ENCODE measurements at regions of chr9 and their contacts with region 1.

Region 1: DNA sequence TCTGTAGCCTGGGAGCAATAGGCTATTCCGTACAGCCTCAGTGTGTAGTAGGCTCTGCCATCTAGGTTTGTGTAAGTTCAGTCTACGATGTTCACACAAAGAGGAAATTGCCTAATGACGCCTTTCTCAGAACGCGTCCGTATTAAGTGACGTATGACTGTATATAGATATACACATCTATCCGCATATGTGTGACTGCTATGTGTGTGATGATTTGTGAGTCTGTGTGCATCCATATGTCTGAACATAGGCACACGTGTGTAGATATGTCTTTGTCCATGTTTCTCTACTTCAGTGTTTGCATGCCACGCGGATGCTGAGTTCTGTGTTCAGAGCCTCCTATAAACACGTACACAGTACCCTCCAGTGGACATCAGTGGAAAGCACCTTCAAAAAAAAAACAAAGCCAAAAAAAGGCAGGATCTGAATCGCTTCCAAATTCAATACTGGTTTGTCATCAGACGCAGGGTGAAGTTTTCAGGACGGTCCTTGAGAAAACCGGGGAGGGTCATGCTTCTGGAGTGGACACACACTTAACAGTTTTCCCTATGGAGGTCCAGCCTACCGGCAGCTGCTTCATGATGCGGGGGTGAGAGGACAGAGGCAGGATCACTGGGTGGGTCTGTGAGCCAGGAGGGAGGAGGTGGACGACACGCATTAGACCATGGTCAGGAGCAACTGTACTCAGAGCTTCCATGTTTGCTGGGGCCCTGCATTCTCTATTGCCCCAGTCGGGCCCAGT is 29.5 kb upstream of the ALDH1B1 start:
- DNase-seq: peak; percentile 68
- CTCF ChIP-seq: peak; percentile 71

Region 2: DNA sequence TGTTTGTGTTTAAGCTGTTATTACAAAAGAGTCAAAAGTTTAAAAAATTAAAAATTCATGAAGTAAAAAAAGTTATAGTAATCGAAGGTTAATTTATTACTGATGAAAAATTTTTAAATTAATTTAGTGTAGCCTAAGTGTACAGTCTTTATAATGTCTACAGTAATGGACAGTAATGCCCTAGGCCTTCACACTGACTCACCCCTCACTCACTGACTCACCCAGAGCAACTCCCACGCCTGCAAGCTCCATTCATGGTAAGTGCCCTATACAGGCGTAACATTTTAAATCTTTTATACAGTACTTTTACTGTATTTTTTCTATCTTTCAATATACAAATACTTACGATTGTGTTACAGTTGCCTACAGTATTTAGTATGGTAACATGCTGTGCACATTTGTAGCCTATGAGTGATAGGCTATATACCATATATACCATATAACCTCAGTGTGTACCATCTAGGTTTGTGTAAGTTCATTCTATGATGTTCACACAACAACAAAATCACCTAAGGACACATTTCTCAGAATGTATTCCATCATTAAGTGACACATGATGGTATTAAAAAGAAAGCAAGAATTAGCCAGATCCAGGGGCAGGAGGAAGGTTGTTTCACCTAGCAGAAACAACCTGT is 522.3 kb before region 1 on chr9:
- in situ Hi-C with region 1: no loop called
- DNase-seq: no peak
- CTCF ChIP-seq: no peak

Region 3: DNA sequence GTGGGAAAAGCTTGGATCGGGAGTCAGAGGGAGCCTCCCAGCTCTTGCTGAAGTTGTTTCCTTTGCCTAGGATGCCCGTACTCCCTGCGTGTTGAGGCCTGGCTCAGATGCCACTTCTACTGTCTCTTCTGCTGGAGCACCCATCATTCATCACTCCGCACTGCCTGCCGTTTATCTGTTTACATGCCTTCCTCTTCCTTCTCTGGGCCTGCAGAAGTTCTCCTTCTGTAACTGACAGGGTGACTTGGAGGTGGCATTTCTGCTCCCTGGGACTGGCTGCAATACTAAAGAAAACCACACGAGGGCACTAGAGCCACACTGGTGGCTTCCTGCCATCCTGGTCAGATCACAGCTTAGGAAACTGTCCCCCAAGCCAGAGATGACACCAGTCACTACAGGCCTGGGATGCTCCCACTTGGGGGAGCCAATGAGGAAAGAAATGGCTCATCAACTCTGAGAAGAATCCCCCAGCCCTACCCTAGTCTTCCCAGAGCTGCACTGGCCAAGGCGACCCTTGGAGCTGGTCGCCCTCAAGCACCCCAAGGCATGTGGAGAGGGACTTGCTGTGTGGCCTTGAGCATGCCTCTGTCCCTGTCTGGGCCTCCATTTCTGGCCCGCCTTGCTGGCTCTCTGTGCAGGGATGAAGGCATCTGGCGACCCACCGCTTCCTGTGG is 449.4 kb before region 1 on chr9:
- in situ Hi-C with region 1: loop called (anchors 10 kb)
- DNase-seq: peak; percentile 85
- CTCF ChIP-seq: peak; percentile 91

Region 4: DNA sequence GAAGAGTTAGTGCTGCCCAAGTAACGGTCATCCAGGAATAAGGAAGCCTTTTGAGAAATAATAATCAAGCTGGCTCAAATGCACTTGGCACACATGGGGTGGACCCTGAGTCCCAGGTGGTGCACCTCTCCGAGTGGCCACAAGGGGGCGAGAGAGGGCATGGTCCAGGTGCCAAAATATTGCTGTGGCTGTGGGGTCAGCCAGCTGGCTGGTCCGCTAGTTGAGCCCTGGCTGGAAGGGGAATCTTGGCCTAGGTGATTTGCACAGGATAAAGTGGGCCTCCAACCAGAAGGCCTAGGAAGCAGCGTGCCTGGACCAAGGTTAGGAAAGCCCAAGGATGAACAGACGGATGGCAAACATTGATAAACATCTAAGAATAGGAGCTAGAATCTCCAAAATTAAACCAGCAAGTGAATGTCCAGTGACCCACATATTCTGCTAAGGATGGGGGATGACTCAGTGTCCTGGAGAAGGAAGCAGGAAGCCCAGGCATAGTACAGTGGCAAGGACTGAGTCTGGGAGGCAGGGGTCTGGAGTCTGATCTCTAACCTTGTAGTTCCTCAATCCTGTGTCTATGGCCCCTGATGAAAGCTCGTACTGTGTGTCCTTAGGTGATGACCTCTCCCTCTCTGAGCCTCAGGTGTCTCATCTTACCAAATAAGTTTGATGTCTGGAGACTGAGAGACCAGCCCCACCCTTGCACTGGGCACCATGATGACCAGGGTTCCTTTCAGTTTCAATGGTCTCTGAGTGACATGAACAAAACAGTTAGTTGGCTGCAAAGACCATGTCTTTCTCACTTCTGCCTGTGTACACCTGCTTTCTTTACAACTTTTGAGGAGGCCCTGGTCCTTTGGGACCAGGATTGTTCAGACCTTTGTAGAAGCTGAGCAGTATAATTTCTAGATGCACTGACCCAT is 274.8 kb before region 1 on chr9:
- in situ Hi-C with region 1: loop called (anchors 25 kb)
- DNase-seq: peak; percentile 68
- CTCF ChIP-seq: peak; percentile 98

Region 5: GRCh38 chr9:38107811-38108304 is 255.2 kb before region 1 on chr9:
- in situ Hi-C with region 1: no loop called
- DNase-seq: no peak
- CTCF ChIP-seq: no peak

Measured in GM13977 (cell line).